ENCODE measurements at regions of chr3 and their contacts with region 1.

Region 1: GRCh38 chr3:36814776-36815175 is 50.4 kb upstream of the DCLK3 start:
- DNase-seq: no peak
- H3K4me3 Mint-ChIP-seq: no peak overlapping the region
- H3K27ac Mint-ChIP-seq: no peak overlapping the region
- H3K4me1 Mint-ChIP-seq: peaks cover 11% of the 10 kb centered on the region
- H3K27me3 Mint-ChIP-seq: no peaks in the 10 kb centered on the region
- CTCF ChIP-seq: no peak

Region 2: GRCh38 chr3:36734742-36735141 is 80.0 kb before region 1 on chr3:
- CTCF ChIA-PET with region 1: interaction called, 10 read pairs
- POLR2A ChIA-PET with region 1: interaction called, 4 read pairs
- intact Hi-C with region 1: no loop called
- DNase-seq: no peak
- H3K4me3 Mint-ChIP-seq: no peak overlapping the region
- H3K27ac Mint-ChIP-seq: no peak overlapping the region
- H3K4me1 Mint-ChIP-seq: no peaks in the 10 kb centered on the region
- H3K27me3 Mint-ChIP-seq: peaks cover 10% of the 10 kb centered on the region
- CTCF ChIP-seq: no peak

Region 3: GRCh38 chr3:36792342-36792741 is 22.4 kb before region 1 on chr3:
- CTCF ChIA-PET with region 1: interaction called, 14 read pairs
- POLR2A ChIA-PET with region 1: no interaction called
- intact Hi-C with region 1: no loop called
- DNase-seq: peak; percentile 51
- H3K4me3 Mint-ChIP-seq: no peak overlapping the region
- H3K27ac Mint-ChIP-seq: no peak overlapping the region
- H3K4me1 Mint-ChIP-seq: no peaks in the 10 kb centered on the region
- H3K27me3 Mint-ChIP-seq: peaks cover 26% of the 10 kb centered on the region
- CTCF ChIP-seq: peak; percentile 53

Region 4: DNA sequence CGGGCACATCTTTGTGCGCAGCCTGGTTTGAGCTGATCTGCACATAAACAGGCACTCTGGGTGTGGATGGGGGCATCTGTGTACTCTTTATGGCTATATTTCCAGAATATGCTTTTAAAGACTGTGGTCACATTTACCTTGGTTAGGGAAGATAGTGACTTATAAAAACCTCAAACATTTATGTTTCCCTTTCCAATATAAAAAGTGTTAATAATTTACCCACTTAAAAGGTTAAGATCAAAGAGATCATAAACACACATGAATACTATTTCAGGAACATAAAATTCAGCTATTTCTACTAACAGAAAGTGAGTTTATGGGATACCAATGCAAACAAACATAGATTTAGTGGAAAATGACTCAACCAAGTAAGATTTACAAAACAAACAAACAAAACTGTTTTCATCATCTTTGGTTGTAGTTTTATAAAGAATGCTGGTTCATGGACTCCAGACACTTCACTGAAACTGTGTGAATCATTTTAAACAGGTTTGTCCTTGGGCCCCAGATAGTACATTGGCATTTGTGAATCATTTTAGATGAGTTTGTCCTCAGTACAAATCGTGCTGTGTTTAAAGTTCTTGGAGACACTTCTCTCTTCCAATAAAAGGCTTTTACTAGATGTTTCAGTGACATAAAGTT is 793.4 kb after region 1 on chr3:
- CTCF ChIA-PET with region 1: no interaction called
- POLR2A ChIA-PET with region 1: no interaction called
- intact Hi-C with region 1: no loop called
- DNase-seq: peak; percentile 54
- H3K4me3 Mint-ChIP-seq: no peak overlapping the region
- H3K27ac Mint-ChIP-seq: peak overlapping the region; percentile 29
- H3K4me1 Mint-ChIP-seq: peaks cover 9% of the 10 kb centered on the region
- H3K27me3 Mint-ChIP-seq: peaks cover 20% of the 10 kb centered on the region
- CTCF ChIP-seq: no peak